ENCODE measurements at regions of chr11 and their contacts with region 1.

Region 1: DNA sequence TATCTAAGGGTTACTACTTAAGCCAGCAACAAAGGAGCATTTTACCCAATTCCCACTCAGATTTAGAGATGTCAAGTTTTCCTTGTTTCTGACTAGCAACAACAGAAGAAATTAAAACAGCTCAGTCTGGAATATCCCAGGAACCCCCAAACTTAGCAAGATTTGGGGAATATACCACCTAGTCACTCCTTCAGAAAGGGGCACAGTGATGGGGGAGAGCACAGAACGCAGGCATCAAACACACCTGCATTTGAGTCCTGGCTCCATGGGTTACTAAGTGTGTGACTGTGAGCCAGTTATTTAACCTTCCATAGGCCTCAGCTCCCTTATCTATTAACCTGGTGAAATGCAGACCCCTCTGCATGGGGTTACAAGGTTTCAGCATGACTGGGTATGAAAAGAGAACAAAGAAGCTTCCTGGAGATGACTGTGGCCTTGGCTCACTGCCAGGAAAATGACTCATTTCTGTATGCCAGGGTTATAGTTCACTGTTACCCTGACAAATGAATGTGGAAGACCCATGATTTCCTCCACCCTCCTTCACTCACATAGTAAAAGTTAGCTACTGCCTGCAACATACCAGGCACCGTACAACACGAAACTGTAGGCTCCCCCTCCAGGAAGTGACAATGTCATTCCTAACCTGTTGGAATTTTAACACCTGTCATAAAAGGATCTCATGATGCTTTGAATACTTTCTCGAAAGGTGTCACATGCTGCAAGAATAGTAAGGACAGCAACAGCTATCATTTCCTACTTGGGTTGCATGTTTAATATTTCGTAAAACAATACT is 79.6 kb downstream of the ME3 start:
- DNase-seq: peak; percentile 94
- H3K4me3 Mint-ChIP-seq: peak overlapping the region; percentile 62
- H3K27ac Mint-ChIP-seq: peak overlapping the region; percentile 90
- H3K4me1 Mint-ChIP-seq: peaks cover 47% of the 10 kb centered on the region
- H3K27me3 Mint-ChIP-seq: no peaks in the 10 kb centered on the region

Region 2: GRCh38 chr11:86176165-86176884 is 416.5 kb before region 1 on chr11:
- intact Hi-C with region 1: loop called (anchors 1 kb)
- DNase-seq: peak; percentile 85
- H3K4me3 Mint-ChIP-seq: peak overlapping the region; percentile 10
- H3K27ac Mint-ChIP-seq: peak overlapping the region; percentile 82
- H3K4me1 Mint-ChIP-seq: peaks cover 27% of the 10 kb centered on the region
- H3K27me3 Mint-ChIP-seq: no peaks in the 10 kb centered on the region

Region 3: GRCh38 chr11:86456052-86456939 is 136.6 kb before region 1 on chr11:
- intact Hi-C with region 1: loop called (anchors 1 kb)
- DNase-seq: peak; percentile 93
- H3K4me3 Mint-ChIP-seq: no peak overlapping the region
- H3K27ac Mint-ChIP-seq: peak overlapping the region; percentile 45
- H3K4me1 Mint-ChIP-seq: peaks cover 45% of the 10 kb centered on the region
- H3K27me3 Mint-ChIP-seq: no peaks in the 10 kb centered on the region

Region 4: GRCh38 chr11:86523738-86524619 is 68.9 kb before region 1 on chr11:
- intact Hi-C with region 1: loop called (anchors 1 kb)
- DNase-seq: no peak
- H3K4me3 Mint-ChIP-seq: peak overlapping the region; percentile 35
- H3K27ac Mint-ChIP-seq: peak overlapping the region; percentile 88
- H3K4me1 Mint-ChIP-seq: peaks cover 28% of the 10 kb centered on the region
- H3K27me3 Mint-ChIP-seq: no peaks in the 10 kb centered on the region

Region 5: DNA sequence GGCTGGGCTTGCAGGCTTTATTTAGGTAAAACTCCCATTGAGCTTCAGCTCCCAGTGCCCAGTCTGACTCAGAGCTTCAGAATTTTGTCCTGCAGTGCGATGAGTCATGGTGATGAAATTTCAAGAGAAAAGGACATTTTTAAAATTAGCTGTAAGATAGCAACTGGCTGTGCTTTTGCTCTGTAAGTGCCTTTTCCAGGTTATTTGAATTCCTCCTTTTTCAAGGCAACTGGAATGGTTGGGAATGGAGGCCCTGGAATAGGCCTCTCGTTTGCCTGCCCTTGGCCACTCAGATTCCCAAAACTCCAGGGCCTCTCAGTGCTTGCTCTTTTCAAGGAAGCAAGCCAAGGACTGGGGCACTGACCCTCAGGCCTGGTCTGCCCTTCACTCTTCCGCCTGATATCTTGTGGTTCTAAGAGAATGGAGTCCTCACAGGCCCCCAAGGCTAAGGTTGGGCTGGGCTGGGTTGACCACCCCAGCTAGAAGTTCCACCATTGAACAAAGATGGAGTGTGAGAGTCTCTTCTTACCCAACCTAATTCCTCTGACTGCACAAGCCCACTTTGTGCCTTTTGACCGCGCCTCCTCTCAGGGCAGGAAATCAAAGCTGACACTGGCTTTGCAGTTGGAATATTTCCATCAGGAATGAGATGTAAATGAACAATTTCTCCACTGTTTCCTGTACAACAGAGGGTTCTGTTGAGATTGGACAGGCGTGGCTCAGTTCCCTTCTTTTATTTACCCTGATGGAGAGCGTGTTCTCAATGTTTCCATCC is 148.0 kb after region 1 on chr11:
- intact Hi-C with region 1: loop called (anchors 1 kb)
- DNase-seq: peak; percentile 55
- H3K4me3 Mint-ChIP-seq: no peak overlapping the region
- H3K27ac Mint-ChIP-seq: peak overlapping the region; percentile 57
- H3K4me1 Mint-ChIP-seq: peaks cover 27% of the 10 kb centered on the region
- H3K27me3 Mint-ChIP-seq: no peaks in the 10 kb centered on the region